ENCODE measurements at regions of chr3 and their contacts with region 1.

Region 1: GRCh38 chr3:121681792-121682191 is 21.1 kb upstream of the HCLS1 start:
- DNase-seq: no peak
- ATAC-seq: no peak
- H3K4me3 ChIP-seq: no peak overlapping the region
- H3K27ac ChIP-seq: no peak overlapping the region
- H3K4me1 ChIP-seq: no peaks in the 10 kb centered on the region
- H3K27me3 ChIP-seq: no peaks in the 10 kb centered on the region
- CTCF ChIP-seq: no peak
- POLR2A ChIP-seq: no peak
- RAD21 ChIP-seq: no peak

Region 2: GRCh38 chr3:121670676-121671075 is 11.1 kb before region 1 on chr3:
- CTCF ChIA-PET with region 1: interaction called, 4 read pairs
- POLR2A ChIA-PET with region 1: interaction called, 17 read pairs
- dilution Hi-C with region 1: no loop called
- in situ Hi-C with region 1: no loop called
- intact Hi-C with region 1: no loop called
- DNase-seq: no peak
- ATAC-seq: no peak
- H3K4me3 ChIP-seq: no peak overlapping the region
- H3K27ac ChIP-seq: no peak overlapping the region
- H3K4me1 ChIP-seq: no peaks in the 10 kb centered on the region
- H3K27me3 ChIP-seq: no peaks in the 10 kb centered on the region
- CTCF ChIP-seq: no peak
- POLR2A ChIP-seq: no peak
- RAD21 ChIP-seq: no peak

Region 3: GRCh38 chr3:121710347-121710746 is 28.6 kb after region 1 on chr3:
- CTCF ChIA-PET with region 1: no interaction called
- POLR2A ChIA-PET with region 1: no interaction called
- dilution Hi-C with region 1: no loop called
- in situ Hi-C with region 1: no loop called
- intact Hi-C with region 1: loop called (anchors 5 kb)
- DNase-seq: no peak
- ATAC-seq: no peak
- H3K4me3 ChIP-seq: no peak overlapping the region
- H3K27ac ChIP-seq: no peak overlapping the region
- H3K4me1 ChIP-seq: no peaks in the 10 kb centered on the region
- H3K27me3 ChIP-seq: no peaks in the 10 kb centered on the region
- CTCF ChIP-seq: no peak
- POLR2A ChIP-seq: no peak
- RAD21 ChIP-seq: no peak

Measured in IMR-90 (cell line).